H1 (cell line): ENCODE measurements at regions of chr18 and their contacts with region 1.

Region 1: GRCh38 chr18:63025251-63026090 is 294.1 kb downstream of the BCL2 start:
- DNase-seq: no peak
- H3K4me3 ChIP-seq: no peak overlapping the region
- H3K27ac ChIP-seq: no peak overlapping the region
- H3K4me1 ChIP-seq: no peaks in the 10 kb centered on the region
- H3K27me3 ChIP-seq: peaks cover 0 to 9% (median 2%) of the 10 kb centered on the region in 4 experiments; a peak in 2 of 7 replicates
- CTCF ChIP-seq: peak; percentile 72 to 86 (median 83)
- EP300 ChIP-seq: no peak
- POLR2A ChIP-seq: no peak
- RAD21 ChIP-seq: peak; percentile 89 to 93

Region 2: GRCh38 chr18:62634987-62635765 is 390.3 kb before region 1 on chr18:
- CTCF ChIA-PET with region 1: no interaction called
- POLR2A ChIA-PET with region 1: no interaction called
- DNase-seq: no peak
- H3K4me3 ChIP-seq: no peak overlapping the region
- H3K27ac ChIP-seq: no peak overlapping the region
- H3K4me1 ChIP-seq: no peaks in the 10 kb centered on the region
- H3K27me3 ChIP-seq: no peaks in the 10 kb centered on the region
- CTCF ChIP-seq: no peak
- EP300 ChIP-seq: no peak
- POLR2A ChIP-seq: no peak
- RAD21 ChIP-seq: no peak

Region 3: GRCh38 chr18:62928326-62928725 is 97.1 kb before region 1 on chr18:
- CTCF ChIA-PET with region 1: no interaction called
- POLR2A ChIA-PET with region 1: no interaction called
- DNase-seq: no peak
- H3K4me3 ChIP-seq: no peak overlapping the region
- H3K27ac ChIP-seq: no peak overlapping the region
- H3K4me1 ChIP-seq: no peaks in the 10 kb centered on the region
- H3K27me3 ChIP-seq: no peaks in the 10 kb centered on the region
- CTCF ChIP-seq: no peak
- EP300 ChIP-seq: no peak
- POLR2A ChIP-seq: no peak
- RAD21 ChIP-seq: no peak

Region 4: GRCh38 chr18:62938487-62938886 is 87.0 kb before region 1 on chr18:
- CTCF ChIA-PET with region 1: no interaction called
- POLR2A ChIA-PET with region 1: no interaction called
- DNase-seq: no peak
- H3K4me3 ChIP-seq: no peak overlapping the region
- H3K27ac ChIP-seq: no peak overlapping the region
- H3K4me1 ChIP-seq: no peaks in the 10 kb centered on the region
- H3K27me3 ChIP-seq: no peaks in the 10 kb centered on the region
- CTCF ChIP-seq: no peak
- EP300 ChIP-seq: no peak
- POLR2A ChIP-seq: no peak
- RAD21 ChIP-seq: no peak

Region 5: DNA sequence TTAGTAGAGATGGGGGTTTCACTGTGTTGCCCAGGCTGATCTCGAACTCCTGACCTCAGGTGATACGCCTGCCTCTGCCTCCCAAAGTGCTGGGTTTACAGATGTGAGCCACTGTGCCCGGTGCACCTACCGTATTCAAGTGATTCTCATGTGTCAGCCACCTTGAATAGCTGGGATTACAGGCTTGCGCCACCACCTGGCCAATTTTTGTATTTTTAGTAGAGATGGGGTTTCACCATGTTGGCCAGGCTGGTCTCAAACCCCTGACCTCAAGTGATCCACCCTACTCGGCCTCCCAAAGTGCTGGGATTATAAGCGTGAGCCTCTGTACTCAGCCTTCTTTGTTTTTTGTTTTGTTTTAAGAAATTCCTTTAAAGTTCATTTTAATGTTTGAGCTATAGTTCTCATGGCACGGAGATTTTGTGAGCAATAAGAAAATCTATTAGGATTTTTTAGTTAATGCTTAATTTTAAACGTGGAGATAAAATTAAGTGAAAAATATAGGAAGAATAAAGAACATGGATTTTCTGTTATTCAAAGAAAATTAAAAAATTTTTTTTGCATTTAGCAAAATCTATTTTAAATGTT is 67.5 kb before region 1 on chr18:
- CTCF ChIA-PET with region 1: no interaction called
- POLR2A ChIA-PET with region 1: no interaction called
- DNase-seq: peak; percentile 15 to 87
- H3K4me3 ChIP-seq: no peak overlapping the region
- H3K27ac ChIP-seq: no peak overlapping the region
- H3K4me1 ChIP-seq: peaks cover 0 to 6% (median 2%) of the 10 kb centered on the region in 4 experiments; a peak in 3 of 7 replicates
- H3K27me3 ChIP-seq: no peaks in the 10 kb centered on the region
- CTCF ChIP-seq: peak in 2 of 3 experiments; percentile 47 to 55; a peak in 3 of 4 replicates
- EP300 ChIP-seq: no peak
- POLR2A ChIP-seq: no peak
- RAD21 ChIP-seq: peak; percentile 62 to 64

Region 6: GRCh38 chr18:63043516-63043915 is 18.0 kb after region 1 on chr18:
- CTCF ChIA-PET with region 1: interaction called, 19 read pairs
- POLR2A ChIA-PET with region 1: no interaction called
- DNase-seq: no peak
- H3K4me3 ChIP-seq: no peak overlapping the region
- H3K27ac ChIP-seq: no peak overlapping the region
- H3K4me1 ChIP-seq: no peaks in the 10 kb centered on the region; a peak in 1 of 7 replicates
- H3K27me3 ChIP-seq: no peaks in the 10 kb centered on the region
- CTCF ChIP-seq: no peak
- EP300 ChIP-seq: no peak
- POLR2A ChIP-seq: no peak
- RAD21 ChIP-seq: no peak

Region 7: DNA sequence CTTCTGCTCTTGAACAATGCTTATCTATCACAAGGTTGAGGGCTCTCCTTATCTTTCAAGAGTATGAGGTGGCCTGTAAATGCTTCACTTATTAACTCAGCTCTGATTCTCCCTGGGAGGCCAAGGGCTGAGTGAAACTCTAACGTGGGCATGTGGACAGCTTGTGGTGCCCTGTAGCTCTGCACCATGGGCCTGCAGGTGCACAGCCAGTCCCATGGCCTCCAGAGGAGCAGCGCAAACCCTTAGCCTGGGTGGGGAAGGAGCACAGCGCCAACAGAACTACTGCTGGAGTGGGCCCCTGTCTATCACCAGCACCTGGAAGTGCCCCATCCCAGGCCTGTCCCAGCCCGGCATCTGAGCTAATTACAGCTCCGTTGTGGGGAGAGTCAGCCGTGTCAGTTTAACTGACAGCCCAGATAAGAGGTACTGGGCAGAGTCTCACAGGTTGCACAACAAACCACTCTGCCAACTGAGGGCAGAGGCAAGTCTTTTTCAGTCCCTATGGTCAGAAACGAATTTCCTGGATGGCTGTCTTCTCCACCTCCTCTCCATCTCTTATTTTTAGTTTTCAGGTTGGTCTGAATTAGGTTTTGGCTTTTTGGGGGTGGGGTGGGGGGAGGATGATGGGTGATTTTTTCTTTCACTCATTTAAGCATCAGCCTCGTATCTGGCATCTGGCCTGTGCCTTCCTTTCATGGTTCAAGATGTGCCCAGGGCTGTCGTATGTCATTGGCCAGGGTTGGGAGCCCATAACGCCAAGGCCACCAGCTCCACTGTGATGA is 74.6 kb after region 1 on chr18:
- CTCF ChIA-PET with region 1: interaction called, 19 read pairs
- POLR2A ChIA-PET with region 1: no interaction called
- DNase-seq: no peak
- H3K4me3 ChIP-seq: no peak overlapping the region
- H3K27ac ChIP-seq: no peak overlapping the region
- H3K4me1 ChIP-seq: peaks cover 0 to 2% (median 0%) of the 10 kb centered on the region in 4 experiments; a peak in 1 of 7 replicates
- H3K27me3 ChIP-seq: no peaks in the 10 kb centered on the region
- CTCF ChIP-seq: no peak
- EP300 ChIP-seq: no peak
- POLR2A ChIP-seq: no peak
- RAD21 ChIP-seq: no peak

Region 8: DNA sequence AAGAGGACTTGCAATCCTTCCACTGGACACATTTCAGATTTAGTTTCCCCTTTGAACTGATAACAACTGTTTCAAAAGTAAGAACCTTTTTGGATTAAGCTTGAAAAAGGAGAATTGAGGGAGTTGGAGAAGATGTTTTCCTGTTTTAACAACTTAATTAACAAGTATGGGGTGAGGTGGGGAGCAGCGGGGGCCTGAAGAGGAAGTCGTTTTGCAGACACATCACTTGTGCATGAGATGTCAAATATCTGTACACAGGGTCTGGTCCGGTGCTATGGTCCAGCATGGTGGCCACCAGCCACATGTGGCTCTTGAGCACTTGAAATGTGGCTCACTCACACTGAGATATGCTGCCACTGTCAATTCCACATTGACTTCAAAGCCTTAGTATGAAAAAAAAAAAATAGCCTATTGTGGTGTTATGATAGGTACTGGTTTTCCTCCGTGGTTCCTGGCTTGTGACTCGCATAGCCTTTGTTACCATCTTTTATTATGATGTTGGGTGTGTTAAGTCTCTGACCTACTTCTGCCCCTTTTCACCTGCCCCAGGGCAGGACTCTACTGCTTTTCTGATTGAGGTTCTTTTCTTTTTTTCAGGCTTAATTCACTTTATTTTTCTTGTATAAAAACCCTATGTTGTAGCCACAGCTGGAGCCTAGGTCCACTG is 88.6 kb after region 1 on chr18:
- CTCF ChIA-PET with region 1: interaction called, 15 read pairs
- POLR2A ChIA-PET with region 1: no interaction called
- DNase-seq: no peak
- H3K4me3 ChIP-seq: no peak overlapping the region
- H3K27ac ChIP-seq: no peak overlapping the region
- H3K4me1 ChIP-seq: no peaks in the 10 kb centered on the region
- H3K27me3 ChIP-seq: no peaks in the 10 kb centered on the region
- CTCF ChIP-seq: no peak
- EP300 ChIP-seq: no peak
- POLR2A ChIP-seq: no peak
- RAD21 ChIP-seq: no peak

Region 9: DNA sequence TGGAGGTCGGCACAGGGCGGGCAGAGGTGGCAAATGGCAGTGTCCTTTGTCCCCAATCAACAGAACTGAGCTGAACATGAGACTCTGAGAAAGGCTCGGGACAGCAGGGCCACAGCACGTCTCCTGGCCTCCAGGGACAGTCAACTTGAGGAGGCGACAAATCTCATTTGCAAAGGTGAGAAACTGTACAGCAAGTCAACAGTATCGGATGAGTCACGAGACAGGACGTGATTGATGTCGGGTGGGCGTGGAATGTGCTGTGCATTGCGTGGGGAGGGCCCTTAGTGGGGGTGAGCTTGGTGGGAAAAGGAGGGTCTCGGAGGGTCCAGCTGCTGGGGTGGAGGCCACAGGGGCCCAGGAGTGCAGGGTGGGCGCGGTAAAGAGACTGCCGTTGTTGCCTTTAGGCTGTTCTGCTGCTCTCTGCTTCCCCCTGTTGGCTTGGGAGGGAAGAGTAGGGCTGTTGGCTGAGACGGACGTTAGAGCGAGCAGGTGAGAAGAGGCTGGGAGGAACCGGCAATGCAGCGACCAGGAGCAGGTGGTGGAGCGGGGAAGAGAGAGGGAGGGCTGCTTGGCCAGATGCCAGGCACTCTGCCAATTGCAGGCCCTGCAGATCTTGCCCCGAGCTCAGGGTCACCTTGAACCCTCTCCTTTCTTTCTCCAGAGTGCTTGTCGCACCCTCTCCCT is 129.8 kb after region 1 on chr18:
- CTCF ChIA-PET with region 1: interaction called, 25 read pairs
- POLR2A ChIA-PET with region 1: no interaction called
- DNase-seq: peak; percentile 50 to 95
- H3K4me3 ChIP-seq: no peak overlapping the region
- H3K27ac ChIP-seq: no peak overlapping the region
- H3K4me1 ChIP-seq: peaks cover 0 to 3% (median 3%) of the 10 kb centered on the region in 4 experiments; a peak in 4 of 7 replicates
- H3K27me3 ChIP-seq: no peaks in the 10 kb centered on the region; a peak in 1 of 7 replicates
- CTCF ChIP-seq: peak; percentile 94 to 96 (median 96)
- EP300 ChIP-seq: no peak
- POLR2A ChIP-seq: no peak
- RAD21 ChIP-seq: peak; percentile 82 to 89

Region 10: DNA sequence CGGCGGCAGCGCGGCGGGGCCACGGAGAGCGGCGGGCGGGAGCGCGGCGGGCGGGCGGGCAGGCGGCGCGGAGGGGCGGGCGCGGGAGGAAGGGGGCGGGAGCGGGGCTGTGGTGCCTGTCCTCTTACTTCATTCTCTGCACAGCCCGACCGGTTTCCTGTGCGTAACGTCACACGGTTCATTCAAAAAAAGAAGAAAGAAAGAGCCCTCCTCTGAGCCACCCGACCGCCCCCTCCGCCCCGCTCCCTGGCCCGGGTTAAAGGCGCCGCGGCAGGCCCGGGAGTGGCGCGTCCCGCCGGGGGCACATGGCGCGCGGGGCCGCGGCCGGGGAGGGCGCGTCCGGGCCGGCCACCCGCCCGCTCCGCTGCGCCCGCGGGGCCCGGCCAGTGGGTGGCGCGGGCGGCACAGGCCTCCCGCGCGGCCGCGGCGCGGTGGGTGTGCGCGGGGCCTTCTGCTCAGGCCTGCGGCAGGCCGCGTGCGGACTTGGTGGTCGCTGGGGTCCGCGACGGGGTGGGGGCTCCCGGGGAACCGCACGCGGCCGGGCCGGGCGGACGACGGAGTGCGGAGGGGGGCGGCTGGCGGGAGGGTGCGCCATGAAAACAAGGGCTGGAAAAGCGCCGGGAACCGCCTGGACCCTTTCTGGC is 294.7 kb after region 1 on chr18:
- CTCF ChIA-PET with region 1: interaction called, 95 read pairs
- POLR2A ChIA-PET with region 1: interaction called, 3 read pairs
- DNase-seq: peak in 1 of 2 experiments; percentile 63
- H3K4me3 ChIP-seq: peak overlapping the region; percentile 43 to 77 (median 62)
- H3K27ac ChIP-seq: no peak overlapping the region
- H3K4me1 ChIP-seq: peaks cover 4 to 10% (median 8%) of the 10 kb centered on the region in 4 experiments; a peak in 4 of 7 replicates
- H3K27me3 ChIP-seq: peaks cover 0 to 37% (median 22%) of the 10 kb centered on the region in 4 experiments; a peak in 6 of 7 replicates
- CTCF ChIP-seq: no peak
- EP300 ChIP-seq: no peak
- POLR2A ChIP-seq: no peak
- RAD21 ChIP-seq: no peak

Region 11: DNA sequence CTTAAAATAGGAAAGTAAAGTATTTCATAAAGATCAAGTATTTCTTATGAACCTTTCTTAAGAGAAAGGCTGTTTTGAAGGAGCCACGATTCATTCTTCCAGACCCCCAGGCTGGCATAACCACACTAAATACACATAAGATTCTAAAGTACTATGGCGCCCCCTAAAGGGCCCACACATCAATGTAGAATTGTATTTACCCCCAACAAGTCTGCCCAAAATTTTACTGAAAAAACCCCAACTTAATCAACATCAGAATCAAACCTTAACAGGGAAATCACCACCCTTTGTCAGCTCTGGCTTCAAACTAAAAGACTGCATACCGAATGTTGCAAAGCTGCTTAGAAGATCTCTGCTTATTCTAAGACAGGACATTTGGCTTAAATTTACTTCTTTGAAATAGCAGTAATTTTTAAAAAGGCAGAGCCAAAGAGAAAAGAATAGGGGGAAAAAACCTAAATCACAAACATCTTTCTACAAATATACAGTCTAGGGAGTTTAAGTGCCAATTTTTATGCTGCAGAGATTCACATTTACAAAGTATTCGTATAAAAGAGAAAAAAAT is 314.5 kb after region 1 on chr18:
- CTCF ChIA-PET with region 1: interaction called, 16 read pairs
- POLR2A ChIA-PET with region 1: no interaction called
- DNase-seq: peak in 1 of 2 experiments; percentile 62
- H3K4me3 ChIP-seq: peak overlapping the region in 1 of 4 experiments; percentile 41; a peak in 2 of 8 replicates
- H3K27ac ChIP-seq: no peak overlapping the region
- H3K4me1 ChIP-seq: peaks cover 0 to 7% (median 3%) of the 10 kb centered on the region in 4 experiments; a peak in 3 of 7 replicates
- H3K27me3 ChIP-seq: no peaks in the 10 kb centered on the region
- CTCF ChIP-seq: peak in 2 of 3 experiments; percentile 51 to 60; a peak in 3 of 4 replicates
- EP300 ChIP-seq: no peak
- POLR2A ChIP-seq: no peak
- RAD21 ChIP-seq: peak; percentile 67 to 72